OCI-LY7 (cell line): ENCODE measurements at regions of chr4 and their contacts with region 1.

Region 1: GRCh38 chr4:26885912-26886274 is 25.3 kb downstream of the STIM2 start:
- DNase-seq: peak; percentile 88
- H3K4me3 ChIP-seq: peak overlapping the region; percentile 61
- H3K27ac ChIP-seq: peak overlapping the region; percentile 95
- H3K4me1 ChIP-seq: peaks cover 62% of the 10 kb centered on the region
- CTCF ChIP-seq: no peak

Region 2: GRCh38 chr4:26871606-26872005 is 14.3 kb before region 1 on chr4:
- CTCF ChIA-PET with region 1: interaction called, 6 read pairs
- POLR2A ChIA-PET with region 1: interaction called, 82 read pairs
- intact Hi-C with region 1: no loop called
- DNase-seq: no peak
- H3K4me3 ChIP-seq: no peak overlapping the region
- H3K27ac ChIP-seq: no peak overlapping the region
- H3K4me1 ChIP-seq: peaks cover 59% of the 10 kb centered on the region
- CTCF ChIP-seq: no peak

Region 3: GRCh38 chr4:26899991-26900390 is 14.1 kb after region 1 on chr4:
- CTCF ChIA-PET with region 1: no interaction called
- POLR2A ChIA-PET with region 1: interaction called, 36 read pairs
- intact Hi-C with region 1: no loop called
- DNase-seq: no peak
- H3K4me3 ChIP-seq: no peak overlapping the region
- H3K27ac ChIP-seq: no peak overlapping the region
- H3K4me1 ChIP-seq: peaks cover 64% of the 10 kb centered on the region
- CTCF ChIP-seq: no peak

Region 4: GRCh38 chr4:26907731-26908599 is 22.1 kb after region 1 on chr4:
- CTCF ChIA-PET with region 1: no interaction called
- POLR2A ChIA-PET with region 1: interaction called, 20 read pairs
- intact Hi-C with region 1: no loop called
- DNase-seq: no peak
- H3K4me3 ChIP-seq: no peak overlapping the region
- H3K27ac ChIP-seq: no peak overlapping the region
- H3K4me1 ChIP-seq: peaks cover 50% of the 10 kb centered on the region
- CTCF ChIP-seq: no peak

Region 5: DNA sequence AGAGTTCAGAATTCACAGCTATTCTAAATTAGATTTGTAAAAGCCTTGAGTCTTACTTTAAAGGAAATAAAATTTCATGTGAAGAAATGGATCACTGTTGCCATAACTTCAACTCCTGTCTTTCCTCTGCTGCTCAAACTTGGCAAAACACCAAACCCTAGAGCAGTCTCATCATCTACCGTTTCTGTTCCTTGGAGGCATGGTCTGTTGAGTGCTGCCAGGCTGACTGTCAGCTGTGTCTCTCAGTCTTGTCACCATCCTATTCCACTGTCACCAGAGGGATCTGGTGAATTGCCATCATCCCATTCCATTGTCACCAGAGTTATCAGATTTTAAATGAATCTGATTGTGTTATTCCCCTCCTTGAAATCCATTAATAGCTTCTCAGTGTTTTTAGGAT is 30.3 kb after region 1 on chr4:
- CTCF ChIA-PET with region 1: interaction called, 5 read pairs
- POLR2A ChIA-PET with region 1: interaction called, 10 read pairs
- intact Hi-C with region 1: no loop called
- DNase-seq: no peak
- H3K4me3 ChIP-seq: no peak overlapping the region
- H3K27ac ChIP-seq: no peak overlapping the region
- H3K4me1 ChIP-seq: peaks cover 24% of the 10 kb centered on the region
- CTCF ChIP-seq: no peak

Region 6: GRCh38 chr4:26936284-26937065 is 50.6 kb after region 1 on chr4:
- CTCF ChIA-PET with region 1: no interaction called
- POLR2A ChIA-PET with region 1: interaction called, 13 read pairs
- intact Hi-C with region 1: no loop called
- DNase-seq: no peak
- H3K4me3 ChIP-seq: no peak overlapping the region
- H3K27ac ChIP-seq: peak overlapping the region; percentile 18
- H3K4me1 ChIP-seq: peaks cover 38% of the 10 kb centered on the region
- CTCF ChIP-seq: no peak

Region 7: GRCh38 chr4:26978387-26979053 is 92.6 kb after region 1 on chr4:
- CTCF ChIA-PET with region 1: no interaction called
- POLR2A ChIA-PET with region 1: no interaction called
- intact Hi-C with region 1: no loop called
- DNase-seq: no peak
- H3K4me3 ChIP-seq: no peak overlapping the region
- H3K27ac ChIP-seq: peak overlapping the region; percentile 8
- H3K4me1 ChIP-seq: peaks cover 19% of the 10 kb centered on the region
- CTCF ChIP-seq: no peak

Region 8: GRCh38 chr4:26992657-26993361 is 106.9 kb after region 1 on chr4:
- CTCF ChIA-PET with region 1: no interaction called
- POLR2A ChIA-PET with region 1: interaction called, 37 read pairs
- intact Hi-C with region 1: no loop called
- DNase-seq: peak; percentile 89
- H3K4me3 ChIP-seq: peak overlapping the region; percentile 49
- H3K27ac ChIP-seq: peak overlapping the region; percentile 89
- H3K4me1 ChIP-seq: peaks cover 59% of the 10 kb centered on the region
- CTCF ChIP-seq: no peak

Region 9: GRCh38 chr4:27635936-27636913 is 750.3 kb after region 1 on chr4:
- CTCF ChIA-PET with region 1: no interaction called
- POLR2A ChIA-PET with region 1: no interaction called
- intact Hi-C with region 1: no loop called
- DNase-seq: no peak
- H3K4me3 ChIP-seq: no peak overlapping the region
- H3K27ac ChIP-seq: no peak overlapping the region
- H3K4me1 ChIP-seq: no peaks in the 10 kb centered on the region
- CTCF ChIP-seq: no peak